Endothelial cell of umbilical vein (primary cell): ENCODE measurements at regions of chr15 and their contacts with region 1.

Region 1: DNA sequence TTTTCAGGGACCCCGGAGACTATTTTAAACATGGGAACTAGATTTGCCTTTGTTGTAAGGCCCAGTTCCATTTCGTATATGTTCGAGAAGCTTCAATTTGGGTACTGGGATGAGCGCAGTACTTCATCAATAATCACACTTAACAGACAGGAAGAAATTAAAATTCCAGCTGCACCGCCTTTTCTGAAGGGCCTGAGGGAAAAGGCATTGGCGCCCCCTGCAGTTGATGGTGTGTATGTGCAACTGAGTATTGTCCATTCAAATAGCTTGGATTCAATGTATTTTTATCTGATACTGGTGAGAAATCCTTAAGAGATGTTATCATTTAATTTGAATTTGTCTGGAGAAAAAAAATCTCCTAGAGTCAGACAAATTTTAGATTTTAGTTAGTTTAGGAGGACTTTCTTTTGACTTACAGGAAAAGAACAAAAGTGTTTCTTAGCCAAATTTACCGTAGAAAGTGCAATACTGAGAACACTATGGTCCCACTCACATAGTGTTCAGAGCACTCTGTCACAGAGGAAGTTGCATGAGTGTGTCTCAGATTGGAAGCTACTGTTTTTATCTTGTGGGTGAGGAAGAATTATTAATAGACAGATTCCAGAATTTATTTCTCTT is 5.4 kb upstream of the ALDH1A2 start:
- DNase-seq: peak; percentile 73
- H3K4me3 ChIP-seq: no peak overlapping the region
- H3K27ac ChIP-seq: no peak overlapping the region
- H3K4me1 ChIP-seq: peaks cover 3% of the 10 kb centered on the region
- H3K27me3 ChIP-seq: no peaks in the 10 kb centered on the region
- CTCF ChIP-seq: peak; percentile 77 to 93
- POLR2A ChIP-seq: no peak

Region 2: GRCh38 chr15:57340682-57341259 is 730.1 kb before region 1 on chr15:
- CTCF ChIA-PET with region 1: interaction called, 7 read pairs
- POLR2A ChIA-PET with region 1: no interaction called
- dilution Hi-C with region 1: no loop called
- intact Hi-C with region 1: loop called (anchors 10 kb)
- DNase-seq: peak; percentile 82
- H3K4me3 ChIP-seq: no peak overlapping the region
- H3K27ac ChIP-seq: no peak overlapping the region
- H3K4me1 ChIP-seq: peaks cover 38% of the 10 kb centered on the region
- H3K27me3 ChIP-seq: no peaks in the 10 kb centered on the region
- CTCF ChIP-seq: peak; percentile 59 to 72
- POLR2A ChIP-seq: no peak

Region 3: DNA sequence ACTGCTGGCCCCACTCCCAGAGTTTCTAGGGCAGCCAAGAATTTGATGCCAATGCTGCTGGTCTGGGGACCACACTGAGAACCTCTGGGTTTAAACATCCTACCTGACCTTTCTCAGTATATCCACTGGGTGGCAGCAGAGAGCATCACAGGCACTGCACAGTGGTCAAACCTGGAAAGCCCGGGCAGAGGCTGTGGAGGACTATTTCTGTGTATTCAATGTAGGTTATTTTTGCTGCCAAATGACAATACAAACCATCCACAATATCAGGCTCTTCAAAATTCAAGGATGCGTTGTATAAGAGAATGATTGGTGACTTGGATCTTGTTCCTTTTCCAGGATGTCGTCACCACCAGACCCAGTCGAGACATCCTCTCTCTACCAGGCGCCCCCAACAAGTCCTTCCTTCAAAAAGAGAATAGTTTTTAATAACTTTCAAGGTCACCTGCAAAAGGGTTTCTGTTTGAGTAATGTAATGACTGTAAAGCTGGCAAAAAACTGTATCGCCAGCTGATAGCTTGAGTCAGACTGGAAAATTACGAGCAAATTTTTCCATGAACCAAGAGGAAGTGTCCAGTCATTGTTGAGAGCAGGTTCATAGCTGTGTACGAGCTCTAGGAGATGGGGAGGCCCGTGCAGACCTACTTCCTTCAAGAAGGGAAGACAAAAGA is 509.7 kb before region 1 on chr15:
- CTCF ChIA-PET with region 1: interaction called, 12 read pairs
- POLR2A ChIA-PET with region 1: no interaction called
- dilution Hi-C with region 1: no loop called
- intact Hi-C with region 1: loop called (anchors 2 kb)
- DNase-seq: peak; percentile 96
- H3K4me3 ChIP-seq: peak overlapping the region in 1 of 3 experiments; percentile 37
- H3K27ac ChIP-seq: peak overlapping the region; percentile 97
- H3K4me1 ChIP-seq: peaks cover 15% of the 10 kb centered on the region
- H3K27me3 ChIP-seq: no peaks in the 10 kb centered on the region
- CTCF ChIP-seq: peak; percentile 79 to 89
- POLR2A ChIP-seq: no peak

Region 4: DNA sequence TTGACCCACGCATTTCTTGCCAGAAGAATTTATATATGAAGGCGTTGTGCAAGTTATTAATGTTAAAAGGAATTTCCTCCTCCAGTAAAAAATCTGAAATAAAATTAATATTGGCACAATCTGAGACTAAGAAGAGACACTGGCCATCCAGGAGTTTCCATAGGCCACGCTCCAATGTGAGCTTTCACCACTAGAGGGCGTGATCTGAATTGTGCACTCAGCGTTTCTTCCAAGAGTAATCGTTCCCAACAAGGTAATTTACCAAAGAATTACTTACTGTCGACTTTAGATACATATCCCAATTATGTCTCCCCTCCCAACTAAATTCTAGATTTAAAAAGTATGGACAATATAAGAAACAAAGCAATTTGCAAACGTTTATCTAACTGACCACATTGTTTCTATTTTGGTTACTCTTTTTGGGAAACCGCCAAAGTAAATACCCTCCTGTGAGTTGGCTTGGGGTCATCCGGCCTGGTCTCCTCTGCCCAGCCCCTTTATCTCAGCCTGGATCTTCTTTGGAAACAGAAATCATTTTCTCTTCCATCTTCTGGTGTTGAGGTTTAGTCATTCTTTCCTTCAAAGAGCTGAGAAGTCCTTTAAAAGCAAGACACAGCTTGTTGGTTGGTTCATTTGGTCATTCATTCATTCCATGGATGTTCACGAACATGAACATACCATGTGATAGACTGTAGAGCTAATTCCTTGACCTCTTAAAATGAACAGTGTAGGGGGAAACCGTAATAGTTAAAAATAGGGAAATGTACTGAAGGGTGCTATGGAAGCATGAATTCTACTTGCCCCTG is 338.2 kb before region 1 on chr15:
- CTCF ChIA-PET with region 1: interaction called, 98 read pairs
- POLR2A ChIA-PET with region 1: no interaction called
- dilution Hi-C with region 1: no loop called
- intact Hi-C with region 1: loop called (anchors 1 kb)
- DNase-seq: peak; percentile 79
- H3K4me3 ChIP-seq: peak overlapping the region in 1 of 3 experiments; percentile 15
- H3K27ac ChIP-seq: no peak overlapping the region
- H3K4me1 ChIP-seq: peaks cover 10% of the 10 kb centered on the region
- H3K27me3 ChIP-seq: no peaks in the 10 kb centered on the region
- CTCF ChIP-seq: peak; percentile 78 to 89
- POLR2A ChIP-seq: no peak

Region 5: GRCh38 chr15:57923306-57923705 is 147.6 kb before region 1 on chr15:
- CTCF ChIA-PET with region 1: interaction called, 14 read pairs
- POLR2A ChIA-PET with region 1: no interaction called
- dilution Hi-C with region 1: no loop called
- intact Hi-C with region 1: no loop called
- DNase-seq: peak; percentile 90
- H3K4me3 ChIP-seq: peak overlapping the region in 1 of 3 experiments; percentile 39
- H3K27ac ChIP-seq: peak overlapping the region; percentile 63
- H3K4me1 ChIP-seq: peaks cover 39% of the 10 kb centered on the region
- H3K27me3 ChIP-seq: no peaks in the 10 kb centered on the region
- CTCF ChIP-seq: no peak
- POLR2A ChIP-seq: no peak

Region 6: DNA sequence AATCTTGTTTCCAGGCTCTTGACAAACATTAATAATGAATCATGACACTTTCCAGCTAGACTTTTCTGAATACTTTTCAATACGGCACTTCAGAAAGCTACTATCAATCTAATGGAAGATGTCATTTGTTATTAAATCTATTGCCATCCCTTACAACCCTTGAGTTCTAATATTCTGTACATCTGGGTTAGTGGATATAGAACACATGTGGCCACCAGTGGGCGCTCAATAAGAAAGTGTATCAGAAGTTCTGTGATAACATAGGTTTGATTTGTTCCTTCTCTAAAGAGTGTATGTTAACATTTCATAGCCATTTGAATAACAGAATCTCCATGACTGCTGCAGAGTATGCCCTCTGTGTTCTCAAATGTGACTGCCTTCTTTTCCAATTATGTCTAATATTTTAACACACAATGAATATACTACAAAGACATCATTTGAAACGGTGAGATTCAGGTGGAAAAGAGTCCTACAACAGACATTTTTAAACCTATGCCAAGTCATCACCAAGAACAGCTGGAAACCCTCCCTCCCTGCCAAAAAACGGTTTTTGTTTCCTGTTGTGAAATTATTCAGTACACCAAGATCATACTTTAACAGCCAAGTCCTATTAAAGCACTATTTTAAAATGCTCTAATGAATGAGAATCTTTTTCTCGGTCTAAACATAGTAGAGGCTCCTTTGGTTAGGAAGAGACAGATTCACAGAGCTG is 27.6 kb before region 1 on chr15:
- CTCF ChIA-PET with region 1: interaction called, 16 read pairs
- POLR2A ChIA-PET with region 1: no interaction called
- dilution Hi-C with region 1: no loop called
- intact Hi-C with region 1: loop called (anchors 2 kb)
- DNase-seq: peak; percentile 65
- H3K4me3 ChIP-seq: no peak overlapping the region
- H3K27ac ChIP-seq: no peak overlapping the region
- H3K4me1 ChIP-seq: peaks cover 26% of the 10 kb centered on the region
- H3K27me3 ChIP-seq: no peaks in the 10 kb centered on the region
- CTCF ChIP-seq: peak; percentile 52 to 55
- POLR2A ChIP-seq: no peak

Region 7: DNA sequence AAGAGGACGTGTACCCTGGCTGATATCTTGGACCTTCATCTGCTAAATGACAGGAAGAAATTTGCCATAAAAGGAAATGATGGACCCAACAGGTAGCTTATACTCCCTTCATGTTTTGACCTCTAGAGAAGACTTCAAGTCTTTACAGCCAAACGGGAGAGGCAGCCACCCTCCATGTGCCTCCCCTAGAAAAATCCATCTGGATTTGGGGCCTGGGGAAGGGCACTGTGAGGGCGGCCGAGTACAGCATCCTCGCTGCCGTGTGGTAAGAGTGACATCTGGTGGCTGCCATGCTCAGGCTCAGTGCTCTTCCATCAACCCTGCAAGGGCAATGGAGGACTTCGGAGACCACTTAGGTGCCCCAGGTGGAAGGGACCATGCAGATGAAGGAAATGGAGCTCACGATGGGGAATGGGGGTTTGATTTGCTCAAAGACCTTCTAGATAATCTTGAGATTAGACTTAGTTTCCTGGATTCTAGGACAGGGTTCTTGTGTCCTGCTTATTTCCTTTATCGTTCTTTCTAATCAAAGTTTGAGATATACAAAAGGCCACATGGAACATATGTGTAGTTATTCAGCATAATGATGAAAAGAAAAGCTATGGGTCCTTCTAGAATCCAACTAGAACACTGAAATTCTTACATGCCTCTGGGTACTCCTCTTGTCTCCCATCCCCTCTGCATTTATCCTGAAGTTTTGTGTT is 111.7 kb after region 1 on chr15:
- CTCF ChIA-PET with region 1: interaction called, 72 read pairs
- POLR2A ChIA-PET with region 1: no interaction called
- dilution Hi-C with region 1: no loop called
- intact Hi-C with region 1: no loop called
- DNase-seq: peak; percentile 76
- H3K4me3 ChIP-seq: no peak overlapping the region
- H3K27ac ChIP-seq: no peak overlapping the region
- H3K4me1 ChIP-seq: peaks cover 20% of the 10 kb centered on the region
- H3K27me3 ChIP-seq: no peaks in the 10 kb centered on the region
- CTCF ChIP-seq: peak; percentile 83 to 93
- POLR2A ChIP-seq: no peak